ENCODE measurements at regions of chr10 and their contacts with region 1.

Region 1: DNA sequence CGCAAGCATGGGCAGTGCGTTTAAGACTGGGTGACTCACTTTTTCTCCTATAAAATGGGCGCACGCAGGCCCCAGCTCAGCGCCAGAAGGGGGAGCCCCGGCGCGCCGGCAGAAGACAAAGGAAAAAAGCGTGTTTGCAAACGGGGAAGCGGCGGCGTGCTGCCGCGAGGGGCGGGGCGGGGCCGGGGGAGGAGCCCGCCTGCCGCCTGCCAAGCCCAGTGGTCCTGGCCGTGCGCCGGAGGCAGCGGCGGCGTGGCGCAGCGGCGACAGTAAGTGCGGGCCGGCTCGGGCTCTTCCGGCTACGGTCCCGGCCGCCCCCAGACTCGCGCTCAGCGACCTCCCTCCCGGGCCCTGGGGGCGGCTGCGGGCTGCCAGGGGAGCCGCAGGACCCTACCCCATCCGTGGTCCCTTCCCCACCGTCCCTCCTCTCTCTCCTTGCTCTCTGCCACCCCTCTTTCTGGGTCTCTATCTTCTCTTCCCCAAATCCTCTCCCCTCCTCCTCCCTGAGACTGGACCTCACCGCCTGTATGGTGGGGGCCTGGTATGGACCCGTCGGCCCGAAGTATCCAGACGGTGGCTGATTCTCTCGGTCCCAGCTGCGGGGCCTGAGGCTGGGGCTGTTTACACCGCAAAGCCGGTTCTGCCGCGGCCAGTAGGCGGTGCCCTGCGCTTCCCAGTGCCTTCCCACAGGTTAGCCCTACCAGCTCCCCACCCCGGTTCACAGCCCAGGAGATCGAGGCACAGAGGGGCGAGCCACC is at the start of gene SLC29A3:
- DNase-seq: peak; percentile 20
- H3K4me3 ChIP-seq: peak within 1 kb of the TSS; percentile 81
- H3K27me3 ChIP-seq: no peaks in the 10 kb centered on the region
- CTCF ChIP-seq: peak; percentile 89
- polyA plus RNA-seq, gene SLC29A3: 4.2 and 7.2 TPM in 2 replicates

Region 2: DNA sequence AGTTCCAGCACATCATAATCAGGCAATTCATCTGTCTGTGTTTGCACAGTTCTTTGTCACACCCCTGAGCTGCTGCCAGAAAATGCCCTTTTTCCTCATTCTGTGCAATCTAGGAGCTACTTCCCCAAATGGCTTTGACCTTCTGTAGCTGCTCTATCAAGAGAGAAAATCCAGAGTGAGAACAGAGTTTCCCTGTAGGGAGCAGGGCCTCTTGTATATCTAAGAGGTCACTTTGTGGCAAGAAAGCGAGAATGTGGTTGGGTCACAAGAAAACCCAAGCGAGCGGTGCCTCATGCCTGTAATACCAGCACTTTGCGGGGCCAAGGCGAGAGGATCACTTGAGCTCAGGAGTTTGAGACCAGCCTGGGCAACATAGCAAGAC is 24.2 kb after region 1 on chr10:
- CTCF ChIA-PET with region 1: interaction called, 16 read pairs
- POLR2A ChIA-PET with region 1: no interaction called
- DNase-seq: no peak
- H3K4me3 ChIP-seq: no peak overlapping the region
- H3K27me3 ChIP-seq: peaks cover 5% of the 10 kb centered on the region
- CTCF ChIP-seq: no peak

Region 3: GRCh38 chr10:71372882-71373495 is 53.8 kb after region 1 on chr10:
- CTCF ChIA-PET with region 1: interaction called, 10 read pairs
- POLR2A ChIA-PET with region 1: interaction called, 3 read pairs
- DNase-seq: no peak
- H3K4me3 ChIP-seq: no peak overlapping the region
- H3K27me3 ChIP-seq: peaks cover 10% of the 10 kb centered on the region
- CTCF ChIP-seq: no peak

Region 4: GRCh38 chr10:71564194-71564820 is 245.1 kb after region 1 on chr10:
- CTCF ChIA-PET with region 1: interaction called, 106 read pairs
- POLR2A ChIA-PET with region 1: no interaction called
- DNase-seq: no peak
- H3K4me3 ChIP-seq: no peak overlapping the region
- H3K27me3 ChIP-seq: peaks cover 7% of the 10 kb centered on the region
- CTCF ChIP-seq: no peak

Region 5: DNA sequence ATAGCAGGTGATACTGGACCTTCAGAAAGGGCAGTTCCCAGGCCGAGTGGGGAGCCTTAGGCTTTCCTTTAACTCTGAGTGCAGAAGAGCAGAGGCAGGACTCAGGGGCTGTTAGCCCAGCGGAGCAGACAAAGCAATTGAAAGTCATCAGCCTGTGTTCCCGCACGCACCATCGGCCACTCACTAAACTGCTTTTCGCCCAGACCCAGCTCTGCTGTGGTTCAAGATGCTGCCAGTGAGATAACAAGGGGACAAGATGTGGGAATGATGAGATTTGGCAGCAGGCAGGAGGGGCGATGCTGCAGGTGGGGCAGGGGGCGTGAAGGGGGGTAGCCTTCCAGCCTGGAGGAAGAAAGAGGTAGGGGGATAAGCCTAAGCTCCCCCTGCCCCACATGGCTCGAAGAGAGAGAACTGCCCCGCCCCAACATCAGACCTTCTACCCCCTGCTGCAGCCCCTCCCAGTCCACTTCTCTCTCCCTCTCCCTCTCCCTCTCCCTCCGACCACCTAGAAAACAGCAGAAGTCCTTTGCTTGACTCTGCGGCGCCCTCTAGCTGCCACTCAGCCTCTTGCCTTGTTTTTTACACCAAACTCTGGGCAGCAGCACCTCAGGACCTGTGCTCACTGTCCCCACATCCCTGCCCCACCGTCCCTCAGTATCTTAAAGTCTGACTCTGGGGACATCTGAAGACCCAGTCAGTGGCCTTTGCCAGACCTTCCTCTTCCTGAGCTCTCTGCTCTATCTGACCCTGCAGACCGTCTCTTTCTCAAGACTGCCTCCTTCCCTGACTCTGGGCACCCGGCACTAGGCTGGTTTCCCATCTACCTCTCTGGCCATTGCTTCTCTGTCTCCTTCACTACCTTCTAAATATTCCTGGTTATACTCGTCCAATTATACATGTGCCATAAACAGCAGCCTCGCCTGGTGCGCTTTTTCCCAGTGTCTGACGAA is 289.9 kb after region 1 on chr10:
- CTCF ChIA-PET with region 1: interaction called, 15 read pairs
- POLR2A ChIA-PET with region 1: no interaction called
- DNase-seq: no peak
- H3K4me3 ChIP-seq: no peak overlapping the region
- H3K27me3 ChIP-seq: peaks cover 5% of the 10 kb centered on the region
- CTCF ChIP-seq: peak; percentile 92

Region 6: GRCh38 chr10:71623098-71623985 is 304.1 kb after region 1 on chr10:
- CTCF ChIA-PET with region 1: interaction called, 12 read pairs
- POLR2A ChIA-PET with region 1: no interaction called
- DNase-seq: no peak
- H3K4me3 ChIP-seq: no peak overlapping the region
- H3K27me3 ChIP-seq: peaks cover 5% of the 10 kb centered on the region
- CTCF ChIP-seq: peak; percentile 49; the same call in 1 of the 2 replicates

Region 7: GRCh38 chr10:71708301-71708703 is 389.1 kb after region 1 on chr10:
- CTCF ChIA-PET with region 1: interaction called, 10 read pairs
- POLR2A ChIA-PET with region 1: no interaction called
- DNase-seq: no peak
- H3K4me3 ChIP-seq: no peak overlapping the region
- H3K27me3 ChIP-seq: peaks cover 2% of the 10 kb centered on the region; the same call in 1 of the 2 replicates
- CTCF ChIP-seq: peak; percentile 82

Region 8: DNA sequence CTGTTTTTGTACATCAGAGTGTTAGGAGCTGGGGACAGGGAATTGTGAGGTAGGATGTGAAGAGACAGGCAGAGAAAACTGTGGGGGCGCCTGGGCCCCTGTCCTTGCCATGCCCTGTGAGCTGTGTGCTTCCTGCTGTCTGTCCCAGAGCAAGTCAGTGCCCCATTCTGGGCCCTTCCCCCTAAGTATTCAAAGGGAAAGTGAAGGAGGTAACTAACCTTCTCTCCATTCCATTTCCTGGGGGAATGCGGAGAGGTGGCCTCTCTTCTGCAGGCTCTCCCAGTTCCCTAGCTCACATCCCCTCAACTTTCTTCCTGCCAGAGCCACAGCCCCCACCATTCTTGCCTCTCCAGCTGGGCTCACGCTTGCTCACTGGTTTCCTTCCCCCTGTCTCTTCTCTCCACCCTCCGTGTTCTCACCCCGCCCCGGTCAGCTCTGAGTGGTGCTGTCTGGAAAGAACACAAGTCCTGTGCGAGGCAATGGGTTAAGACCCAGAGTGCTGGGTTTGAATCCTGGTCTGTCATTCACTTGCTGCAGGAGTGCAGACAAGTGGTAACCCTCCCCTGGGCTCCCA is 463.8 kb after region 1 on chr10:
- CTCF ChIA-PET with region 1: no interaction called
- POLR2A ChIA-PET with region 1: no interaction called
- DNase-seq: no peak
- H3K4me3 ChIP-seq: no peak overlapping the region
- H3K27me3 ChIP-seq: peaks cover 7% of the 10 kb centered on the region; the same call in 1 of the 2 replicates
- CTCF ChIP-seq: no peak

Measured in BJ (cell line).